ENCODE measurements at regions of chr1 and their contacts with region 1.

Region 1: GRCh38 chr1:48870596-48870995 is 93.9 kb upstream of the BEND5 start:
- DNase-seq: no peak
- ATAC-seq: peak; percentile 45
- H3K4me3 Mint-ChIP-seq: no peak overlapping the region
- H3K27ac Mint-ChIP-seq: no peak overlapping the region
- H3K4me1 Mint-ChIP-seq: peaks cover 2% of the 10 kb centered on the region
- H3K27me3 Mint-ChIP-seq: peaks cover 2% of the 10 kb centered on the region
- CTCF ChIP-seq: no peak

Region 2: GRCh38 chr1:48552420-48552819 is 318.2 kb before region 1 on chr1:
- CTCF ChIA-PET with region 1: no interaction called
- POLR2A ChIA-PET with region 1: no interaction called
- intact Hi-C with region 1: loop called (anchors 1 kb)
- DNase-seq: no peak
- ATAC-seq: no peak
- H3K4me3 Mint-ChIP-seq: no peak overlapping the region
- H3K27ac Mint-ChIP-seq: no peak overlapping the region
- H3K4me1 Mint-ChIP-seq: no peaks in the 10 kb centered on the region
- H3K27me3 Mint-ChIP-seq: no peaks in the 10 kb centered on the region
- CTCF ChIP-seq: no peak

Region 3: DNA sequence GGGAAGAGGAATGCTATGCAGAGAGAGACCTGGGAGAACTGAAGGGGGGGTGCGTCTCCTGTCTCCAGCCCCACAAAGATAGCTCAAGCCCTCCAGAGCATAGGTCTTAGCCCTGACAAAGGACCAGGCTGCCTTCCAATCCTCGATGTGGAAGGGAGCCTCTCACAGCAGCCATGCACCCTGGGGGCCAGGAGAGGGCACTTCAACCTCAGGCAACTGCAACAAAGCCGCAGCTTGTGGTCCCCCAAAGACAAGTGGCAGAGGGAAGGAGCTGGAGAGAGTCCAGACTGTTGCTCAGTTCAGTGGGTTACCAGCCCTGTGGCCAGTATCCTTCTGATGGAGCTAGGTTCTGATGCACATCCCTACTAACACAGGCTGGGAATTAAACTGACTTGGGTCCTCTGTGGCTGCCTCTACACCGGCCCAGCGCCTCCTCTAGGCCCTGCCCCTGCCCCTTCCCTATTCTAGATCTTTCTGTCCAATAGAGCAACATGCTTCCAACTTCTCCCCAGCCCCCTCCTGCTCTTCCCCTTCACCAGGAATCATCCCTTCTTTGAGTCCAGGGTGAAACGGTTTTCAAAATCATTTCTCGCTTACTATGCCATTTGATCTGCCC is 297.8 kb before region 1 on chr1:
- CTCF ChIA-PET with region 1: interaction called, 8 read pairs
- POLR2A ChIA-PET with region 1: no interaction called
- intact Hi-C with region 1: loop called (anchors 1 kb)
- DNase-seq: no peak
- ATAC-seq: no peak
- H3K4me3 Mint-ChIP-seq: no peak overlapping the region
- H3K27ac Mint-ChIP-seq: no peak overlapping the region
- H3K4me1 Mint-ChIP-seq: no peaks in the 10 kb centered on the region
- H3K27me3 Mint-ChIP-seq: peaks cover 1% of the 10 kb centered on the region
- CTCF ChIP-seq: no peak

Region 4: GRCh38 chr1:48677306-48678287 is 193.0 kb before region 1 on chr1:
- CTCF ChIA-PET with region 1: interaction called, 11 read pairs
- POLR2A ChIA-PET with region 1: no interaction called
- intact Hi-C with region 1: loop called (anchors 1 kb)
- DNase-seq: peak; percentile 31
- ATAC-seq: peak; percentile 68
- H3K4me3 Mint-ChIP-seq: no peak overlapping the region
- H3K27ac Mint-ChIP-seq: no peak overlapping the region
- H3K4me1 Mint-ChIP-seq: peaks cover 8% of the 10 kb centered on the region
- H3K27me3 Mint-ChIP-seq: peaks cover 18% of the 10 kb centered on the region
- CTCF ChIP-seq: peak; percentile 68

Region 5: DNA sequence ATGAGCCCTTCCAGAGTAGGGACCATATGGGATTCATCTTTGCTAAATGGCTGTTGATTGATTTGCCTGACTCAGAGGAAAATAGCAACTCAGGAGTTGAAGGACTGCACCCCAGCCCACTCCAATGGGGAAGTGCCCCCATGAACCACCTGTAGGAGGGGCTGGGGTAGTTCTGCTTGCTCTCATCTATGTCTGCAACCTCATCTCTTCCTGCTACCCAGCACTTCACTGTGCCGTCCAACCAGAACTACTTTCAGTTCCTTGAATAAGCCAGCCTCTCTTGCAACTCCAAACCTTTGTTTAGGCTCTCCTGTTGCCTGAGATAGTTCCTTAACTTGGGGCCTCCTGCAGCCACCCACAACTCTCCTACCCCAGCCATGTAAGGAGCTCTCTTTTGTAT is 120.5 kb before region 1 on chr1:
- CTCF ChIA-PET with region 1: interaction called, 4 read pairs
- POLR2A ChIA-PET with region 1: no interaction called
- intact Hi-C with region 1: loop called (anchors 2 kb)
- DNase-seq: peak; percentile 35
- ATAC-seq: peak; percentile 100
- H3K4me3 Mint-ChIP-seq: peak overlapping the region; percentile 8
- H3K27ac Mint-ChIP-seq: peak overlapping the region; percentile 87
- H3K4me1 Mint-ChIP-seq: peaks cover 47% of the 10 kb centered on the region
- H3K27me3 Mint-ChIP-seq: no peaks in the 10 kb centered on the region
- CTCF ChIP-seq: no peak

Region 6: DNA sequence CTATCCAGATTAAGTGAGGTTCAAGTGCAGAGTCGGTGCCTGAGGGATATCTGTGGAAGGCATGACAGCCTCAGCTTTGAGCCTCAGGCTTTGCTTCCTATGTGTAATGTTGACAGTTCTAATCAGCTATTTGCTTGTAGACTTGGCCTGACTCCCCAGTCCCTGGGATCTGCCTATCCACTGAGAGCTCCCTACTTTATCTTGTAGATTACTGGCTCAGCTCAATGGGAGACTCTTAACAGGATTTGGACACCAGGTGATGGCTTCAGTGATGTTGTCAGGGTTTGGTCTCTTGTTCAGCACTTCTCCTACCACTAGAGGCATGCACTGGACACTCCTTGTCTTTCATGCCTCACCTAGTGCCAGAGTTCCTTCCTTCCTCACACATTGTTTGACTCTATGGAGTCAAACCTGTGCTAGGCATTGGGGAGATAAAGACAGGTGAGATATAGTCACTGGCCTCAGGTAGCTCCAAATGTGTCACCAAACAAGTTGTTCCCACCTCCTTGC is 32.8 kb after region 1 on chr1:
- CTCF ChIA-PET with region 1: no interaction called
- POLR2A ChIA-PET with region 1: no interaction called
- intact Hi-C with region 1: no loop called
- DNase-seq: no peak
- ATAC-seq: no peak
- H3K4me3 Mint-ChIP-seq: no peak overlapping the region
- H3K27ac Mint-ChIP-seq: no peak overlapping the region
- H3K4me1 Mint-ChIP-seq: no peaks in the 10 kb centered on the region
- H3K27me3 Mint-ChIP-seq: peaks cover 12% of the 10 kb centered on the region
- CTCF ChIP-seq: no peak

Measured in activated B cell treated with CpG ODN at 0.5 μM for 24 hours (primary cell).